Activated CD4-positive, alpha-beta T cell treated with anti-CD3 and anti-CD28 coated beads for 36 hours (primary cell): ENCODE measurements at regions of chr5 and their contacts with region 1.

Region 1: DNA sequence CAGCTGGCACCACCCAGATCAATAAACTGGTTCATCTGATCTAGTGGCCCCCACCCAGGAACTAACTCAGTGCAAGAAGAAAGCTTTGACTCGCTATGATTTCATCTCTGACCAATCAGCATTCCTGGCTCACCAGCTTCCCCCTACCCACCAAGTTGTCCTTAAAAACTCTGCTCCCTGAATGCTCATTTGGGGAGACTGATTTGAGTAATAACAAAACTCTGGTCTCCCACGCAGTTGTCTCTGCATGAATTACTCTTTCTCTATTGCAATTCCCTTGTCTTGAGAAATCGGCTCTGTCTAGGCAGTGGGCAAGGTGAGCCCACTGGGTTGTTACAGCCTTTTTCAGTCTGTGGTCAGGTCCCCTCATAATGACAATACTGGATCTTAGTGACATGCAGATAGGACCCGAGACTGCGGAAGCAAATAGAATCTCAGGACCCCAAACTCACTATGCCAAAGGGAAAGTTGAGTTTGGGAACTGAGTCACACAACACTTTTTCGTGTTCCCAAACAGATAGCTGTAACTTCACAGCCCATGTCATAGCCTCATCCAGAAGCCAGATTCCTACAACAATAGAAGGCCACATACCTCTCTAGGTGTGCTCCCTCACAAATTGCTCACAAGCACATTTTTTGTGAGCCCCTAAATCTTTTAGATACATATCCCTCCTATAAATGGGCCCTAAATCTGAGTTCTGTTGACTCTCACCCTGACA is 175.2 kb upstream of the RAI14 start:
- DNase-seq: peak; percentile 50
- ATAC-seq: peak; percentile 70
- H3K4me3 Mint-ChIP-seq: no peak overlapping the region
- H3K27ac Mint-ChIP-seq: no peak overlapping the region
- H3K4me1 Mint-ChIP-seq: peaks cover 19% of the 10 kb centered on the region
- H3K27me3 Mint-ChIP-seq: peaks cover 30% of the 10 kb centered on the region

Region 2: DNA sequence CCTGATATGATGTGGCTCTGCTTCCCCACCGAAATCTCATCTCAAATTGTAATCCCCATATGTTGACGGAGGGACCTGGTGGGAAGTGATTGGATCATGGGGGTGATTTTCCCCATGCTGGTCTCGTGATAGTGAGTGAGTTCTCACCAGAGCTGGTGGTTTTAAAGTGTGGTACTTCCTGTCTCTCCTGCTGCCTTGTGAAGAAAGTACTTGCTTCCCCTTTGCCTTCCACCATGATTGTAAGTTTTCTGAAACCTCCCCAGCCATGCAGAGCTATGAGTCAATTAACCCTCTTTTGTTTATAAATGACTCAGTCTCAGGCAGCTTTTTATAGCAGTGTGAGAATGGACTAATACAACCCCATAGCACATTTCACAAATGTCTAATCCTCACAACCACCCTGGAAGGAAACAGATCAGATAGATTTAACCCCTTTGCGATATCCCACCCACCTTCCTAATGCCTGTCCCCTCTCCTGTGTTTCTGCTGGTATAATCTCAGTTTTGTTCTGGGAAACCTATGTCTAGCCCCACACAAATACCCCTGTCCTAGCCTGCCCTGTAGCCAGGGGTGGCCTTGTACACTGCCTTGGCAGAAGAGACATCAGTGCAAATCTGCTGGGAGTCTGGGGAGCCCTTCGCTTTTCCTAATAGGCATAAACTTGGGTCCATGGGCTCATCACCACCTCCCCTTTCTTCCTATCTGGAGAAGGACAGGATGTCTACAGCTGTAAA is 18.2 kb after region 1 on chr5:
- CTCF ChIA-PET with region 1: interaction called, 11 read pairs
- POLR2A ChIA-PET with region 1: no interaction called
- intact Hi-C with region 1: loop called in 1 of 2 experiments (anchors 1 kb)
- DNase-seq: peak; percentile 40
- ATAC-seq: peak; percentile 96
- H3K4me3 Mint-ChIP-seq: no peak overlapping the region
- H3K27ac Mint-ChIP-seq: peak overlapping the region; percentile 61
- H3K4me1 Mint-ChIP-seq: peaks cover 12% of the 10 kb centered on the region
- H3K27me3 Mint-ChIP-seq: peaks cover 21% of the 10 kb centered on the region

Region 3: GRCh38 chr5:34533582-34534522 is 52.9 kb after region 1 on chr5:
- CTCF ChIA-PET with region 1: interaction called, 10 read pairs
- POLR2A ChIA-PET with region 1: interaction called, 3 read pairs
- intact Hi-C with region 1: loop called (anchors 1 to 2 kb)
- DNase-seq: peak; percentile 56
- ATAC-seq: peak; percentile 77
- H3K4me3 Mint-ChIP-seq: no peak overlapping the region
- H3K27ac Mint-ChIP-seq: peak overlapping the region; percentile 76
- H3K4me1 Mint-ChIP-seq: peaks cover 41% of the 10 kb centered on the region
- H3K27me3 Mint-ChIP-seq: peaks cover 5% of the 10 kb centered on the region

Region 4: GRCh38 chr5:34660444-34661112 is 179.6 kb after region 1 on chr5:
- CTCF ChIA-PET with region 1: no interaction called
- POLR2A ChIA-PET with region 1: no interaction called
- intact Hi-C with region 1: no loop called
- DNase-seq: no peak
- ATAC-seq: no peak
- H3K4me3 Mint-ChIP-seq: no peak overlapping the region
- H3K27ac Mint-ChIP-seq: no peak overlapping the region
- H3K4me1 Mint-ChIP-seq: peaks cover 11% of the 10 kb centered on the region
- H3K27me3 Mint-ChIP-seq: peaks cover 27% of the 10 kb centered on the region